ENCODE measurements at regions of chr1 and their contacts with region 1.

Region 1: DNA sequence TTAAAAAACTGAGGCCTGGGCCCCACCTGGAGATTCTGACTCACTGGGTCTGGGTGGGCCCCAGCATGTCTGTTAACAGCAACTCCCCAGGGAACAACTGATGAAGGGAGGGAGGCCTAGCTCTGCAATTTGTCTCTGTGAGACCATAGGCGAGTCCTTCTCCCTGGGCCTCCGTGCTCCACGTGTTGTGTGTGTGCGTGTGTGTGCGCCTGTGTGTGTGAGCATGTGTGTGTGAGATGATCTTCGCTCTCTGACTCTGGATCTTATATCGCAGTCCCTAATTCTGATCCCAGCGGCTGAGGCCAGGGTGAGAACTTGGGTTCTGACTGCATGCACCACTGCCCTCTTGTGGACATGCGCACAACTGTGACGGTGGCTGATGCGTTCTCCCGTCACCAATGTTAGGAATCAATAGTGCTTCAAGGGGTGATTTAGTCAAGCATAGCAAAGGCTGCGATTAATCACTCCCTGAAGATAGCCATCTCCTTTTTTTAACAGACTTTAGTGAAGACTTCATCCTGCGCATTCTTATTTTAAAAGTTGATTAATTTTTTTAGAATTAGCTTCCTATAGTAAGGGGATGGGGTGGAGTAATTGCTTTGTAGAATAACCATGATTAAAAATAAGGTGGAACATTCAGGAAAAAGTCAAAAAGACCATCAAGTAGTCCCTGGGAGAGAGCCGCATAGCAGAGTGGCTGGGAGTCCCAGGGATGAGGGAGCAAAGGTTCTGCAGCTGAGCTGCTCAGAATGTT is 62.4 kb upstream of the USP24 start:
- DNase-seq: peak; percentile 94
- H3K4me3 Mint-ChIP-seq: peak overlapping the region; percentile 50
- H3K27ac Mint-ChIP-seq: peak overlapping the region; percentile 76
- H3K4me1 Mint-ChIP-seq: peaks cover 26% of the 10 kb centered on the region
- H3K27me3 Mint-ChIP-seq: peaks cover 9% of the 10 kb centered on the region

Region 2: GRCh38 chr1:54996359-54996868 is 281.1 kb before region 1 on chr1:
- intact Hi-C with region 1: no loop called
- DNase-seq: peak; percentile 93
- H3K4me3 Mint-ChIP-seq: peak overlapping the region; percentile 43
- H3K27ac Mint-ChIP-seq: no peak overlapping the region
- H3K4me1 Mint-ChIP-seq: peaks cover 21% of the 10 kb centered on the region
- H3K27me3 Mint-ChIP-seq: peaks cover 28% of the 10 kb centered on the region

Region 3: GRCh38 chr1:55127827-55128343 is 149.7 kb before region 1 on chr1:
- intact Hi-C with region 1: loop called (anchors 1 kb)
- DNase-seq: peak; percentile 69
- H3K4me3 Mint-ChIP-seq: peak overlapping the region; percentile 48
- H3K27ac Mint-ChIP-seq: peak overlapping the region; percentile 85
- H3K4me1 Mint-ChIP-seq: peaks cover 21% of the 10 kb centered on the region
- H3K27me3 Mint-ChIP-seq: no peaks in the 10 kb centered on the region

Region 4: GRCh38 chr1:55140546-55140983 is 137.0 kb before region 1 on chr1:
- intact Hi-C with region 1: loop called (anchors 1 kb)
- DNase-seq: peak; percentile 93
- H3K4me3 Mint-ChIP-seq: peak overlapping the region; percentile 6
- H3K27ac Mint-ChIP-seq: peak overlapping the region; percentile 52
- H3K4me1 Mint-ChIP-seq: peaks cover 13% of the 10 kb centered on the region
- H3K27me3 Mint-ChIP-seq: no peaks in the 10 kb centered on the region

Region 5: GRCh38 chr1:55164906-55165305 is 112.6 kb before region 1 on chr1:
- intact Hi-C with region 1: loop called (anchors 1 kb)
- DNase-seq: no peak
- H3K4me3 Mint-ChIP-seq: no peak overlapping the region
- H3K27ac Mint-ChIP-seq: peak overlapping the region; percentile 78
- H3K4me1 Mint-ChIP-seq: peaks cover 30% of the 10 kb centered on the region
- H3K27me3 Mint-ChIP-seq: no peaks in the 10 kb centered on the region

Region 6: GRCh38 chr1:55337801-55338447 is 60.4 kb after region 1 on chr1:
- intact Hi-C with region 1: loop called (anchors 2 kb)
- DNase-seq: peak; percentile 72
- H3K4me3 Mint-ChIP-seq: no peak overlapping the region
- H3K27ac Mint-ChIP-seq: no peak overlapping the region
- H3K4me1 Mint-ChIP-seq: peaks cover 7% of the 10 kb centered on the region
- H3K27me3 Mint-ChIP-seq: peaks cover 5% of the 10 kb centered on the region

Region 7: GRCh38 chr1:56003846-56004245 is 726.3 kb after region 1 on chr1:
- intact Hi-C with region 1: no loop called
- DNase-seq: no peak
- H3K4me3 Mint-ChIP-seq: no peak overlapping the region
- H3K27ac Mint-ChIP-seq: no peak overlapping the region
- H3K4me1 Mint-ChIP-seq: no peaks in the 10 kb centered on the region
- H3K27me3 Mint-ChIP-seq: no peaks in the 10 kb centered on the region

Region 8: DNA sequence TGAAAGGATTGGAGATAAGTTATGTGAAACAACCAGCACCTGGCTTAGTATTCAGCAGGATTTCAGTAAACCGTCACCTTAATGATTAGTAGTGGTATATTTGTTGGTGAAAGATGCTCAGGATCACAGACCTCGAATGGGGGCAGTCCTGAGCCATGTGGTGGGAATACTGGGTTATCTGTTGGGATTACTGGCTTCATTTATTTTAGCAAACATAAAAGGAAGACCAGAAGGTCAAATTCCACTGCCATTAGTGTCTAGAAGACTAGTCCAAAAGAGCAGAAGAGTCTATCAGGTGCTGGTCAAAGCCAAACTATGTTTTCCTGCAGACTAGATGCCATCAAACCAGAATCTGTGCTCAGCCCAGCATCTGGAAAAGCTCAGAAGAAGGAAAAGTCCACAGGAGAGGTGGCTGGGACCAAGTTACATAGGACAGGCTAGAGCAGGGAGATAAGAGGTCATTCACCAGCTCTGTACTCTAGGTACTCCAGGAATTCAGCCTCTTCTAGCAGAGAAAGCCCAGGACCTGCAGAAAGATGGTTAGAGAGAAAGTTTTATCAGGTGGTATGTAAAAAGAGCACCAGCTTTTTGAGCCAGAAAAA is 958.5 kb after region 1 on chr1:
- intact Hi-C with region 1: no loop called
- DNase-seq: no peak
- H3K4me3 Mint-ChIP-seq: no peak overlapping the region
- H3K27ac Mint-ChIP-seq: no peak overlapping the region
- H3K4me1 Mint-ChIP-seq: no peaks in the 10 kb centered on the region
- H3K27me3 Mint-ChIP-seq: no peaks in the 10 kb centered on the region

Measured in activated CD4-positive, alpha-beta T cell treated with anti-CD3 and anti-CD28 coated beads, Interleukin-2, amount 10 ng/mL, durations not matched to agents 24 days and 14 days (primary cell).